ENCODE measurements at regions of chrX and their contacts with region 1.

Region 1: DNA sequence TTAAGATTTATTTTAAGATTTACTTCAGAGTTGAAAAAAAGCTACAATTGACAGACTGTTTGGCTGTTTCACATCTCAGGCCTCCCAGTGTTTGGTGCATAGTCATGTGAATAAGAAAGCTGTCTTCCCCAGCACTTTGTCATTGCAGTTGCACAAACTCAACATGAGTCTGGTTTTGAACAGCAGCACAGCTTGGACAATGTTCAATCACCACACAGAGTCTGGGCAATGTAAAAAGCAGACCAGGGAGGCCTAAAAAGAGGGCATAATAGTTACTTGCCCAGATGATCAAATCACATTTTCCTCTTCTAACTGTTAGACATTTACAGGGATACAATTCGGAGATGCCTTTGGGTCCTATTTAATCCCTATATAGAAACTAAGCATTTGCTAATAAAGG is 1055.0 kb downstream of the RPA4 start:
- DNase-seq: no peak

Region 2: GRCh38 chrX:97995834-97996233 is 57.1 kb after region 1 on chrX:
- intact Hi-C with region 1: loop called (anchors 10 kb)
- DNase-seq: no peak